ENCODE measurements at regions of chr7 and their contacts with region 1.

Region 1: GRCh38 chr7:18257711-18258110 is 230.1 kb upstream of the PRPS1L1 start:
- DNase-seq: no peak
- H3K4me3 ChIP-seq: no peak overlapping the region
- H3K27ac ChIP-seq: no peak overlapping the region
- H3K4me1 ChIP-seq: no peaks in the 10 kb centered on the region
- H3K27me3 ChIP-seq: no peaks in the 10 kb centered on the region
- CTCF ChIP-seq: no peak

Region 2: GRCh38 chr7:18228686-18229085 is 29.0 kb before region 1 on chr7:
- CTCF ChIA-PET with region 1: interaction called, 16 read pairs
- POLR2A ChIA-PET with region 1: no interaction called
- intact Hi-C with region 1: no loop called
- DNase-seq: no peak
- H3K4me3 ChIP-seq: no peak overlapping the region
- H3K27ac ChIP-seq: no peak overlapping the region
- H3K4me1 ChIP-seq: no peaks in the 10 kb centered on the region
- H3K27me3 ChIP-seq: no peaks in the 10 kb centered on the region
- CTCF ChIP-seq: no peak